Naive thymus-derived CD4-positive, alpha-beta T cell (primary cell): ENCODE measurements at regions of chr2 and their contacts with region 1.

Region 1: DNA sequence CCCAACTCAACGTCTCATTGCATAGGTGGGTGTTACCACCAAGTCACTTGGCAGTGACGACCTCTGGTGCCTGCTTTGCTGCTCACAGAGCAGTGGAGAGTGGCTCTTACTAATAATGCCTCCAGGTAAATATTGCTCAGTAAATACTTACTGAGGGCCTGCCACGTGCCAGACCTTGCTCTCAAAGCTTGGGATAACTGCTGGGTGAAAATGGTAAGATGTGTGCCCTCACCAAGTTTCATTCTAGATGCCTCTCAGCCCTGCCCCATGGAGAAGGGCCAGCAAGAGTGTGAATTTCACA is 27.8 kb downstream of the ITGA6 start:
- DNase-seq: peak in 2 of 9 donors; percentile 25 to 26
- ATAC-seq: peak; percentile 48
- H3K4me3 ChIP-seq: no peak overlapping the region
- H3K4me3 Mint-ChIP-seq: peak overlapping the region in 6 of 10 donors; percentile 8 to 72 (median 62)
- H3K27ac ChIP-seq: no peak overlapping the region
- H3K27ac Mint-ChIP-seq: peak overlapping the region in 7 of 9 donors; percentile 75 to 98 (median 85)
- H3K4me1 ChIP-seq: peaks cover 10 to 79% of the 10 kb centered on the region in 2 donors
- H3K4me1 Mint-ChIP-seq: peaks cover 21 to 96% (median 91%) of the 10 kb centered on the region in 7 donors
- H3K27me3 ChIP-seq: no peaks in the 10 kb centered on the region
- H3K27me3 Mint-ChIP-seq: peaks cover 0 to 20% (median 0%) of the 10 kb centered on the region in 5 donors

Region 2: DNA sequence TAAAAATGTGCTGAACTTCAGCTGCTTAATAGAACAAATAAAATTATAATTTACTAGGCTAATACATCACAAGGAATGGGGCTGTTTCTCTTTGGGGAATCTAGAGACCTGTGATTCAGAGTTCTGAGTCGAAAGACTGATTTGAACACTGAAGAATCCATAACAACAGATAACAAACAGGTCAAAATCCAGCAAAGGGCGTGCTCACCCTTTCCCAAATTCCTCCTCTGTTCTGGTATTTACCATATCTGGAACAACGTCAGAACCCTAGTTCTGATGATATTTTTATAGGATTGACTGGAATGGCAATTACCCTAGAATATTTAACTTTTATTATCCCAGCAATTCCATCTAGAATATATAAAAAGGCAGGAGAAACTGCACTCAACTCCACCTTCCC is 93.8 kb before region 1 on chr2:
- CTCF ChIA-PET with region 1: no interaction called
- POLR2A ChIA-PET with region 1: no interaction called
- intact Hi-C with region 1: no loop called
- DNase-seq: no peak
- ATAC-seq: no peak
- H3K4me3 ChIP-seq: no peak overlapping the region
- H3K4me3 Mint-ChIP-seq: no peak overlapping the region
- H3K27ac ChIP-seq: no peak overlapping the region
- H3K27ac Mint-ChIP-seq: no peak overlapping the region
- H3K4me1 ChIP-seq: no peaks in the 10 kb centered on the region
- H3K4me1 Mint-ChIP-seq: peaks cover 2 to 15% (median 14%) of the 10 kb centered on the region in 7 donors
- H3K27me3 ChIP-seq: no peaks in the 10 kb centered on the region
- H3K27me3 Mint-ChIP-seq: peaks cover 0 to 2% (median 0%) of the 10 kb centered on the region in 5 donors

Region 3: DNA sequence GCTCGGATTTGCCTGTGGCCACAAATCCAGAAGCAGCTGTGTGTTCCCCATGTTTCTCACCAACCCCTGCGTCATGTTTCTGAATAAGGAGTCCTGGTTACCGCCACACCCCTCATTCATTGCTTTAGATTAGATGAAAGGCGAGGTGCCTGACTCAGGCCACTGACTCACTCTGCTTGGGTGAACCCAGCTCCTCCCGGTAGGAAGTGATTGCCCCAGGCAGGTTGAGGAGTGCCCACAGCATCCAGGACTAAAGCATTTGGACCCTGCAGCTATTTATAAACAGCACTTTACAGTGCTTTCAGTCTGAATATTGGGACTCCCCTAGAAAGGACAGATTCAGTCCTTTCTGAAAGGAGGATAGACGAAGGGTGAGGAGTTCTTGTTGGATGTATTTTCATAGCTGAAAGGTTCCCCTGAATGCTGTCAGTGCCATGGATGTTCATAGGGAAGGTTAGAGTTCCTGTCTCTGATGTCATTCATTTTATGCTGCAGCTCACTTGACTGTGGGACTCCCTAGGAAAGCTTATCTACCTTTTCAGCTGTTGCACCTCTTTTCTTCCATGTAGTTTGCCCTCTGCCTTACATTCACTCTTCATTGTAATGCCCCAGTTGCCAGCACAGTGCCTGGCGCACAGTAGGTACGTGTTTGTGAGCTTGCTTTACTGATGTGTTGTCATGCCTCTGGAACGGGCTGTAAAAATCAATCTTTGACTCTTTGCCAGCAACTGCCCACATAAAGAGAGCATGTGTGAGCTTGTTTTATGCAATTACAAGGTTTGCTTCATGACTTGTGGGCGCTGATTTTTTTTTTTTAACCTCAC is 12.9 kb before region 1 on chr2:
- CTCF ChIA-PET with region 1: interaction called, 673 read pairs
- POLR2A ChIA-PET with region 1: interaction called, 862 read pairs
- intact Hi-C with region 1: loop called in 1 of 2 experiments (anchors 1 kb)
- DNase-seq: peak in 3 of 9 donors; percentile 42 to 63 (median 46)
- ATAC-seq: peak; percentile 47
- H3K4me3 ChIP-seq: peak overlapping the region; percentile 46
- H3K4me3 Mint-ChIP-seq: peak overlapping the region in 9 of 10 donors; percentile 59 to 95 (median 91)
- H3K27ac ChIP-seq: peak overlapping the region; percentile 41
- H3K27ac Mint-ChIP-seq: peak overlapping the region in 8 of 9 donors; percentile 37 to 97 (median 90)
- H3K4me1 ChIP-seq: peaks cover 59 to 80% of the 10 kb centered on the region in 2 donors
- H3K4me1 Mint-ChIP-seq: peaks cover 33 to 79% (median 72%) of the 10 kb centered on the region in 7 donors
- H3K27me3 ChIP-seq: no peaks in the 10 kb centered on the region
- H3K27me3 Mint-ChIP-seq: peaks cover 0 to 31% (median 0%) of the 10 kb centered on the region in 5 donors

Region 4: DNA sequence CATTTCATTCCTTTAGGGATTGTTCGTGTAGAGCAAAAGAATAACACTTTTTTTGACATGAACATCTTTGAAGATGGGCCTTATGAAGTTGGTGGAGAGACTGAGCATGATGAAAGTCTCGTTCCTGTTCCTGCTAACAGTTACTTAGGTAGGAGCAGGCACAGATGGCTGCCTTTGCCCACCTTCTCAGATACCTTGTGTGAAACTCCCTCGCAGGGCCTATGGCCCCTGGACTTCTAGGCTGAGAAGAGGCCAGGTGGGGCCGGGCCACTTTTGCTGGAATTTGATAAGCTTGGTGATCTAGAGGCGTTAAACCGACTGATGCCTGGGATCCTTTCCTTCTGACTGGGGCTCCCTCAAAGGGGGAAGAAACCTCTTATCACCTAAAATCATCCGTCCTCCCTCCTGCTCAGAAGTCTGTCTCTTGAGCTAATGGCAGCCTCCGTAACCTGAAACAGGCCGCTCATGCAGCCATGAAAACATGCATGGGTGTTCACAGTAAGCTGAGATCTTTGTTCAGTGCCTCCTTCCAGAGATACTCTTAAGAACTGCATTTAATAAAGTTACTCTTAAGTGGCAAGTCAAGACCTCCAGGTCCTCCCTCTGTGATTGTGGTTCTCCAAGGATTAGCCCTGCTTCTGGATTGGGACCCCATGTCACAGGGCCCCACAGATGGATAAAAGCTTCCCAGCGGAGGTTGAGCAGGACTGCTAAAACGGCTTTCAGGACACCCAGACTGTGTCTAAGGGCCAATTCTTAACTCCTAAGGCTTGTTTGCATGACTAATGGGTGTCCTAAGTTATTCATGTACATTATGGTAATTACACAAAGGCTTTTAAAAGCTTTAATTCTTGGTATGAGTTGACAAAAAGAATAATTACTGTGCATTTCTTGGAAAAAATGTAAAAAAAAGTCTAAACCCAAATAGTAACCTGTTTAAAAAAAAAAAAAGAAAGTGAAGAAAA is 16.1 kb after region 1 on chr2:
- CTCF ChIA-PET with region 1: no interaction called
- POLR2A ChIA-PET with region 1: no interaction called
- intact Hi-C with region 1: no loop called
- DNase-seq: no peak
- ATAC-seq: no peak
- H3K4me3 ChIP-seq: no peak overlapping the region
- H3K4me3 Mint-ChIP-seq: peak overlapping the region in 9 of 10 donors; percentile 16 to 84 (median 68)
- H3K27ac ChIP-seq: no peak overlapping the region
- H3K27ac Mint-ChIP-seq: peak overlapping the region in 8 of 9 donors; percentile 64 to 90 (median 81)
- H3K4me1 ChIP-seq: peaks cover 0 to 34% of the 10 kb centered on the region in 2 donors
- H3K4me1 Mint-ChIP-seq: peaks cover 17 to 89% (median 77%) of the 10 kb centered on the region in 7 donors
- H3K27me3 ChIP-seq: no peaks in the 10 kb centered on the region
- H3K27me3 Mint-ChIP-seq: no peaks in the 10 kb centered on the region